MCF 10A (cell line): ENCODE measurements at regions of chr12 and their contacts with region 1.

Region 1: GRCh38 chr12:10372534-10372931 is 17.3 kb downstream of the KLRK1 start:
- DNase-seq: no peak
- H3K4me3 Mint-ChIP-seq: no peak overlapping the region
- H3K27ac Mint-ChIP-seq: peak overlapping the region; percentile 1
- H3K4me1 Mint-ChIP-seq: peaks cover 29% of the 10 kb centered on the region
- H3K27me3 Mint-ChIP-seq: no peaks in the 10 kb centered on the region
- CTCF ChIP-seq: no peak

Region 2: DNA sequence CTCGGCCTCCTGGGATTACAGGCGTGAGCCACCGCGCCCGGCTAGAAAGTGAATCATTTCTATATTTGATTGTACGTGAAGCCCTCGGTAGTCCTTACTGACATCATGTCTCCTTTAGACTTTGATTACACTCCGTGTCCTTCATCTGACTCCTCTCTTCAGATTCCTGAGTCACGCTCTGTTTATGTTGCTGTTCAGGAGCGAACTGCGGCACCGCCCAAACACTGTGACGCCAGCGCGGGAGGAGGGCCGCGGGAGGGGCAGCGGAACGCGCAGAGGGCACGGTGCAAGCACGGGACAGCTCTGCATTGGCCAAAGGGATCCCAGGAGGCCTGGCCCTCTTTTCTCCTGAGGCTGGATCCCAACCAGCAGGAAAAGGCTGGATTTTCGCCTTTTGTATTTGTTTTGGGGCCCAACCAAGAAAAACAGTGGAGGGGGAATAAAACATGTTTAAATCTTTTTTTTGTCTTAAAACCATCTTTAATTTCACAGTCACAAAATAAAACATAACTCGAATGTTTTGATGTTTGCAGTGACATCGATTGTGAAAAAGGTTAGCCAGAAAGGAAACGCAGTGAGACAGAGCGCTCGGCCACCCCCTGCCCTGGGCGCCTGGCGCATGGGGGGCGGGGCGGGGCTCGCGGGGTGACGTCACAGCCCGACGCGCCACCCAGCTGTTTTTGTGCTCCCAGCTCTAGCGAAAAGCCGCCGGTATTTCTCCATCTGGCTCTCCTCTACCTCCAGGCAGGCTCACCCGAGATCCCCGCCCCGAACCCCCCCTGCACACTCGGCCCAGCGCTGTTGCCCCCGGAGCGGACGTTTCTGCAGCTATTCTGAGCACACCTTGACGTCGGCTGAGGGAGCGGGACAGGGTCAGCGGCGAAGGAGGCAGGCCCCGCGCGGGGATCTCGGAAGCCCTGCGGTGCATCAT is 160.1 kb before region 1 on chr12 and contains the start of gene GABARAPL1:
- CTCF ChIA-PET with region 1: no interaction called
- POLR2A ChIA-PET with region 1: no interaction called
- intact Hi-C with region 1: no loop called
- DNase-seq: peak; percentile 98
- H3K4me3 Mint-ChIP-seq: peak within 1 kb of the TSS; percentile 88
- H3K27ac Mint-ChIP-seq: peak within 1 kb of the TSS; percentile 99
- H3K4me1 Mint-ChIP-seq: peaks cover 21% of the 10 kb centered on the region
- H3K27me3 Mint-ChIP-seq: no peaks in the 10 kb centered on the region
- CTCF ChIP-seq: no peak
- total RNA-seq, gene GABARAPL1: 19.7 and 28.1 TPM in 2 replicates

Region 3: DNA sequence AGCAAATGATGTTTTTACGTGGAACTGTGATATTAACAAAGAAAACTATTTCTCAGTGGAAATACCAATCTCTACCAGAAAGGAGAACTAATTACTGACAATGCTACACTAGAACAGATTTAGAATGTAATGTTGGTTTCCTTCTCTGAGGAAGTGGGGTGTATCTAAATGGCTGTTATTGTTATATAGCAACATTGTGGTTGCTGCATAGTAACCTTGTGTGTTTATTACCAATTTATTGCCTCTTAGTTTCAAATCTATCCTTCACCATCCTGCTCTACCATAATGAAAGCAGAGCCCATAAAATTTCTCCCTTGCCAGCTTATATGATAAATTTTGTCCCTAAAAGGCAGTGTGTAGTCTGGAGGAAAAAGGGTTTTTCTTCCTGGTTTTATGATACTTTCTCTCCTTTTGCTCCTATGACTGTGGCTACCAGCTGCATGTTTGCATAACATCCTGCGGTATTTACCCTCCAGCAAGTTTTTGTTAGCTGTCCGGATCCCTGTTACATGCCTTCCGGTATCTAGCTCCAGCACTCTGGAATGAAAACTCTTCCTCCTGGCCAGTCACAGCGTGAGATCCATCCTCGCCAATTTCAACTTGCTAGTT is 23.0 kb after region 1 on chr12:
- CTCF ChIA-PET with region 1: interaction called, 4 read pairs
- POLR2A ChIA-PET with region 1: interaction called, 135 read pairs
- intact Hi-C with region 1: no loop called
- DNase-seq: peak; percentile 93
- H3K4me3 Mint-ChIP-seq: peak overlapping the region; percentile 68
- H3K27ac Mint-ChIP-seq: peak overlapping the region; percentile 99
- H3K4me1 Mint-ChIP-seq: peaks cover 31% of the 10 kb centered on the region
- H3K27me3 Mint-ChIP-seq: no peaks in the 10 kb centered on the region
- CTCF ChIP-seq: no peak

Region 4: DNA sequence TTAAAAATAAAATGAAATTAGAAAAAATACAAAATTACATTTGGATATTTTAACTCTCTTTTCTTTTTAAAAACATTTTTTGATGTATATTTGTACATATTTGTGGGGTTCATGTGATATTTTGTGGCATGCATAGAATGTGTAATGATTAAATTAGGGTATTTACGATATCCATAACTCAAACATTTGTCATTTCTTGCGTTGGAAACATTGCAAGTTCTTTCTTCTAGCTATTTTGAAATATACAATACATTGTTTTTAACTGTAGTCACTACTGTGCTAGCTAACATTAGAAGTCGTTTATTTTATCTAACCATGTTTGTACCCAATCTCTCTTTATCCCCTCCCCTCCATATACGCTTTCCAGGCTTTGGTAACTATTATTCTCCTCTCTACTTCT is 119.2 kb after region 1 on chr12:
- CTCF ChIA-PET with region 1: no interaction called
- POLR2A ChIA-PET with region 1: no interaction called
- intact Hi-C with region 1: no loop called
- DNase-seq: no peak
- H3K4me3 Mint-ChIP-seq: no peak overlapping the region
- H3K27ac Mint-ChIP-seq: no peak overlapping the region
- H3K4me1 Mint-ChIP-seq: no peaks in the 10 kb centered on the region
- H3K27me3 Mint-ChIP-seq: no peaks in the 10 kb centered on the region
- CTCF ChIP-seq: no peak